Activated CD8-positive, alpha-beta T cell treated with anti-CD3 and anti-CD28 coated beads, Interleukin-2, amount 10 ng/mL, durations not matched to agents 7 days and 5 days (primary cell): ENCODE measurements at regions of chr1 and their contacts with region 1.

Region 1: GRCh38 chr1:58941471-58942289 is 157.8 kb upstream of the JUN start:
- DNase-seq: peak; percentile 73
- ATAC-seq: peak; percentile 87
- H3K4me3 Mint-ChIP-seq: peak overlapping the region; percentile 65
- H3K27ac Mint-ChIP-seq: peak overlapping the region; percentile 85
- H3K4me1 Mint-ChIP-seq: peaks cover 71% of the 10 kb centered on the region
- H3K27me3 Mint-ChIP-seq: no peaks in the 10 kb centered on the region

Region 2: GRCh38 chr1:58607391-58607790 is 334.3 kb before region 1 on chr1:
- CTCF ChIA-PET with region 1: no interaction called
- POLR2A ChIA-PET with region 1: no interaction called
- DNase-seq: no peak
- ATAC-seq: no peak
- H3K4me3 Mint-ChIP-seq: no peak overlapping the region
- H3K27ac Mint-ChIP-seq: no peak overlapping the region
- H3K4me1 Mint-ChIP-seq: no peaks in the 10 kb centered on the region
- H3K27me3 Mint-ChIP-seq: peaks cover 23% of the 10 kb centered on the region

Region 3: GRCh38 chr1:58755468-58755872 is 186.2 kb before region 1 on chr1:
- CTCF ChIA-PET with region 1: no interaction called
- POLR2A ChIA-PET with region 1: no interaction called
- DNase-seq: peak; percentile 71
- ATAC-seq: peak; percentile 75
- H3K4me3 Mint-ChIP-seq: peak overlapping the region; percentile 45
- H3K27ac Mint-ChIP-seq: peak overlapping the region; percentile 90
- H3K4me1 Mint-ChIP-seq: peaks cover 50% of the 10 kb centered on the region
- H3K27me3 Mint-ChIP-seq: no peaks in the 10 kb centered on the region

Region 4: DNA sequence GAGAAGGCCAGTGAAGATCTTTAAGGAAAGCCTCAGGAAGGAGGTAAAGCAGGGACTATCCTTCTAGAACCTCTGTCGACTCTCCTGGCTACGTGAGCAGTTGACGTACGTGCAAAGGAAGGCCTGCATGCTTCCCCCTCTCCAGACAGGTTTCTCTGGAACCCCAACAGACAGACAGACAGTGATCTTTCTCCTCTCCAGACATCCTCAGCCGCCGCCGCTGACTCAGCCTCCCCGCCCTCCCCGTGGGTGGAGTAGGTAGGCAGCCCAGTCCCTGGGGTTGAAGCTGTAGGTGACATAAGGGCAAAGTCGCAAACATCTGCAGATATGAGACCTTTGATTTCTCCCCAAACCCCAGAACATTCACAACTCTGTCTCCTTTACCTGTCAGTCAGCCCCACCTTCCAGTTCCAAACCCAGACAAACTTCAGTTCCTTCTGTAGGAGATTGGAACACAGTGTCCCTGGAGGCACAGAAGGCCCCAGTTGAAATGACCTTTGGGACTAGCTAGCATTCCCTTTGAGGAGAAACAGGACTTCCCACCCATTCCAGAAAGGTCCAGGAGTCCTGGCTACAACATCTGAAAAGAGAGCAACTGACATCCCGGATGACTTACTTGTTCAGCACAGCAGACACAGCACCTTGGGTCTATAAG is 11.9 kb before region 1 on chr1:
- CTCF ChIA-PET with region 1: interaction called, 5 read pairs
- POLR2A ChIA-PET with region 1: interaction called, 12 read pairs
- DNase-seq: peak; percentile 67
- ATAC-seq: peak; percentile 85
- H3K4me3 Mint-ChIP-seq: no peak overlapping the region
- H3K27ac Mint-ChIP-seq: peak overlapping the region; percentile 17
- H3K4me1 Mint-ChIP-seq: peaks cover 58% of the 10 kb centered on the region
- H3K27me3 Mint-ChIP-seq: no peaks in the 10 kb centered on the region

Region 5: GRCh38 chr1:58968360-58968952 is 26.8 kb after region 1 on chr1:
- CTCF ChIA-PET with region 1: interaction called, 13 read pairs
- POLR2A ChIA-PET with region 1: interaction called, 4 read pairs
- DNase-seq: peak; percentile 63
- ATAC-seq: peak; percentile 75
- H3K4me3 Mint-ChIP-seq: peak overlapping the region; percentile 67
- H3K27ac Mint-ChIP-seq: peak overlapping the region; percentile 99
- H3K4me1 Mint-ChIP-seq: peaks cover 47% of the 10 kb centered on the region
- H3K27me3 Mint-ChIP-seq: peaks cover 3% of the 10 kb centered on the region

Region 6: GRCh38 chr1:59020151-59020997 is 78.7 kb after region 1 on chr1:
- CTCF ChIA-PET with region 1: interaction called, 3 read pairs
- POLR2A ChIA-PET with region 1: interaction called, 10 read pairs
- DNase-seq: peak; percentile 72
- ATAC-seq: peak; percentile 95
- H3K4me3 Mint-ChIP-seq: peak overlapping the region; percentile 72
- H3K27ac Mint-ChIP-seq: peak overlapping the region; percentile 97
- H3K4me1 Mint-ChIP-seq: peaks cover 26% of the 10 kb centered on the region
- H3K27me3 Mint-ChIP-seq: no peaks in the 10 kb centered on the region

Region 7: GRCh38 chr1:59046730-59047157 is 105.1 kb after region 1 on chr1:
- CTCF ChIA-PET with region 1: interaction called, 10 read pairs
- POLR2A ChIA-PET with region 1: interaction called, 5 read pairs
- DNase-seq: peak; percentile 75
- ATAC-seq: peak; percentile 90
- H3K4me3 Mint-ChIP-seq: peak overlapping the region; percentile 49
- H3K27ac Mint-ChIP-seq: peak overlapping the region; percentile 86
- H3K4me1 Mint-ChIP-seq: peaks cover 49% of the 10 kb centered on the region
- H3K27me3 Mint-ChIP-seq: no peaks in the 10 kb centered on the region